ENCODE measurements at regions of chr5 and their contacts with region 1.

Region 1: GRCh38 chr5:127875235-127876021 is 172.2 kb downstream of the CCDC192 start:
- DNase-seq: peak; percentile 24 to 53
- ATAC-seq: peak; percentile 72 to 96 (median 88)
- H3K4me3 ChIP-seq: no peak overlapping the region
- H3K27ac ChIP-seq: peak overlapping the region; percentile 22 to 74 (median 67)
- H3K4me1 ChIP-seq: peaks cover 2 to 61% (median 37%) of the 10 kb centered on the region in 9 donors
- H3K27me3 ChIP-seq: no peaks in the 10 kb centered on the region
- CTCF ChIP-seq: peak in 8 of 9 donors; percentile 7 to 59 (median 38)

Region 2: GRCh38 chr5:127766676-127767340 is 108.6 kb before region 1 on chr5:
- intact Hi-C with region 1: loop called in 1 of 10 experiments (anchors 10 kb)
- DNase-seq: no peak
- ATAC-seq: peak in 4 of 8 donors; percentile 11 to 62 (median 44)
- H3K4me3 ChIP-seq: no peak overlapping the region
- H3K27ac ChIP-seq: peak overlapping the region in 5 of 10 donors; percentile 3 to 57 (median 9)
- H3K4me1 ChIP-seq: peaks cover 0 to 31% (median 14%) of the 10 kb centered on the region in 9 donors
- H3K27me3 ChIP-seq: no peaks in the 10 kb centered on the region
- CTCF ChIP-seq: no peak

Region 3: DNA sequence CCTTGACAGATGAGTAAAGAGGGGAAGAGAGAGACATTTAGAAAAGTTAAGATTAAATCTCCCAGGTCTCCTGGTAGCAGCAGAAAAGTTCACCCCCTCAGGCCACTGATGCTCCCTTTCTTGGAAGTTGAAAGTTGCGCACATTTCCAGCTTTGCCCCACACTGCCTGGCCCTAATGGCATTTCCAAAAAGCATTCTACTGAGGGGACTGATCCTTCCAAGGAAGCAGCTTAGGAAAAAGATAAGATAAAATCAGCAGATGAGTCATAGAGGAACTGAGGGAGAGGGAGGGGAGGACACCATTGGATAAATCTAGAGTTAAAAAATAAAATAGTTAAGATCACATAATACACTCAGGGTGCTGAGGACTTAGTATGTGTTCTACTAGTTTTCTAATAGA is 140.5 kb after region 1 on chr5:
- intact Hi-C with region 1: loop called in 1 of 10 experiments (anchors 5 kb)
- DNase-seq: no peak
- ATAC-seq: peak in 1 of 8 donors; percentile 50
- H3K4me3 ChIP-seq: no peak overlapping the region
- H3K27ac ChIP-seq: no peak overlapping the region
- H3K4me1 ChIP-seq: peaks cover 0 to 42% (median 4%) of the 10 kb centered on the region in 9 donors
- H3K27me3 ChIP-seq: no peaks in the 10 kb centered on the region
- CTCF ChIP-seq: no peak

Measured in heart right ventricle (tissue), 16 donors.